ENCODE measurements at regions of chr1 and their contacts with region 1.

Region 1: DNA sequence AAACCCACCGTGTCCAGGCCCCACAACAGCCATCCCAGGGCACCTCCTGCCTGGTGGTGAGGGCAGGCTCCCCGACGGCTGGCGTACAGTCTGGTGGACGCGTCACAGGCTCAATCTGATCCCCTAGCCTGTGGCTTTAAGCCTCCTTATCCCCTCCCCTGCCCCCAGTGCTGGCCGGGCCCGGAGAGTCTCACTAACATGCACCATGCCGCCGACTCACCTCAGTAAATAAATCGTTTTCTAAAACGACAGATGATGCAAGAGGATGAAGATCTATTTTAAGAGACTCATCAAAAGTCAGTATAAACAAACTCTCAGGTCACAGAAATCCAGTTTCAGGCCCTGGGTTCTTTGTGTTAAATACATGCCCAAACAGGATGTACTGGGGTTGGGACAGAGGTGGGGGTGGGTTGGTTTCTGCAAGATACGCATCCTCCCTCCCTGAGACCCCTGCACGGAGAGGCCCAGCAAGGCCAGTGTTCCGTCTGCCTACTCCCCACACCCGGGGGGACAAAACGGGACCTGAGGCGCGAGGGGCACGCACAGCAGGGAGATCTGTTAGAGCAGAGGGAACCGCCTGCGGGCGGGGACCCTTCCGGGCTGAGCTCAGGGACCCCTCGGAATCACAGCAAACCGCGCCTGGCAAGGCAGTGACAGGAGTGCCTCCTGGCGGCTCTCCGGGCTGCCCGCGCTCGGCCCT is 3.1 kb downstream of the PANK4 start:
- DNase-seq: no peak
- ATAC-seq: no peak
- H3K4me3 ChIP-seq: no peak overlapping the region
- H3K27ac ChIP-seq: no peak overlapping the region
- H3K4me1 ChIP-seq: peaks cover 46% of the 10 kb centered on the region
- H3K27me3 ChIP-seq: no peaks in the 10 kb centered on the region
- CTCF ChIP-seq: no peak
- POLR2A ChIP-seq: no peak

Region 2: GRCh38 chr1:2404840-2405476 is 118.4 kb before region 1 on chr1:
- intact Hi-C with region 1: loop called (anchors 5 kb)
- DNase-seq: no peak
- ATAC-seq: no peak
- H3K4me3 ChIP-seq: no peak overlapping the region
- H3K27ac ChIP-seq: no peak overlapping the region
- H3K4me1 ChIP-seq: no peaks in the 10 kb centered on the region
- H3K27me3 ChIP-seq: no peaks in the 10 kb centered on the region
- CTCF ChIP-seq: no peak
- POLR2A ChIP-seq: no peak